Left colon (tissue), 2 donors: ENCODE measurements at regions of chr5 and their contacts with region 1.

Region 1: DNA sequence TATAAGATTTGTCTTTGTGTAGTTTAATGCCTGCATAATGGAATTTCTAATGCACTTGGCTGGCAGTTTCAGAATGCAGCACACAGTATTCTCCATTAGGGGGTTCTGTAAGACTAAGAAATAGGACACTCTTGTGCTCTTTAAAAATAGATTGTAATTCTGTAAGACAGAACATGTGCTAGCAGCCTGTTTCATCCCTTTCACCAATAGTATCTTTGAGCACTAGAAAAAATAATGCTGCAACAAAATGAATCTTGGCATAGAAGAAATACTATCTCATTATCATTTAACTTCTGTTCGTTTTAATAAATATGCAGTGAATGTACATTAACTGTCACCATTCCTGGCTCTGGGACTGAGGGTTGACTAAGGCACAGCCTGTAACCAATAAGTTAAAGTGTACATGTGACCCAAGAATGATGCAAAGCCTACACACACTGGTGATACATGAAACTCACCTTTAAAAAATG is 23.8 kb upstream of the ZNF622 start:
- DNase-seq: no peak
- ATAC-seq: peak; percentile 63

Region 2: DNA sequence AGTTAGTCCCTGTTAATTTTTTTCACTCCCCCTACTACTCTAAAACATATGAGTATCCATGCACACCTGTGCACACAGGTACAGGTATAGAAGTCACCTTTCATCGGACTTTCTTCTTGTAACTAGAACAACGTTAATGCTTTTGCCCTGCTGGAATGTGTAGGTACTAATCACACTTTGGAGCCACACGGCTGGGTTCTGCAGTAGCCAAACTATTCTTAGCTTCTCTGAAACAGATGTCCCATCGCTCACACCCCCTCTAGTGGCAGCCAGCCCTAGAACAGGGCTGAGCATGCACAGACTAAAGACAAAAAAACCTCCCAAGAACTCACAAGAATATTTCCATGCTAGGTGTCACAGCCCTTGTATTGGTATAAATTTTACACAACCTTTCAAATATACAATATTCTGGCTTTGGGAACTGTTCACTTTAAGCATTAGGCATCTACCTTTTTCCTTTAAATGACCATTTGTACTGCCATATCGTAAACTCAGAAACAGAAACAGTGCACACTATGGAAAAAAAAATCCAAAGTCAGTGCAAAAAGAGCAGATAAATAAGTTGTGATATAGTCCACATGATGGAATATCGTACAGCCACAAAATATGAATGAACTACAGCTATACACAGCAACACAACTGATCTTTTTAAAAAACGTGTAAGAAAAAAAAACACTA is 63.4 kb after region 1 on chr5:
- intact Hi-C with region 1: loop called in 1 of 2 experiments (anchors 5 kb)
- DNase-seq: peak; percentile 80 to 92
- ATAC-seq: peak; percentile 88

Region 3: DNA sequence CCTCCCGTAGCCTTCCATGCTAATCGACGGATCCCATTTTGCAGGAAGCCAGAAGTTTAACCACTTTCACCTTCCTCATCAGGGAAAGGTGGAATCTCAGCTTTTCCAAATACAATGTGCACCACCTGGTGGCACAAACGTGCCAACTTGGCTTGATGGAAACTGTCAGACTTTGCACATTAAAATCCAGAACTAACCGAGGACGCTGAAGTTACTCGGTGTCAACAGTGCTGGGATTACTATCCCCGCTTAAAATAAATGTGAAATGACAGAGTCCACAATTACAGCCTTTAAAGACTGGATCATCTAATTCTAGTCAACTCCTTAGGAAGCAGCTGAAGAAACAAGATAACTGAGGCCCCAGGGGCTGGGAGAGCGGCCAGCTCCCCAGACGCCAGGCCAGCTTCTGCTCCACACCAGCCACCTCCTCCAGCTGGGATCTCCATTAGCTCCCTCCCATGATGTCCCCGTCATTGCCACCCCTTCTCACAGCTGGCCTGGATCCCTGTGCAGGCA is 177.6 kb after region 1 on chr5:
- intact Hi-C with region 1: loop called in 1 of 2 experiments (anchors 10 kb)
- DNase-seq: peak; percentile 46 to 72
- ATAC-seq: peak; percentile 76